Gastrocnemius medialis (tissue), 4 donors: ENCODE measurements at regions of chr3 and their contacts with region 1.

Region 1: DNA sequence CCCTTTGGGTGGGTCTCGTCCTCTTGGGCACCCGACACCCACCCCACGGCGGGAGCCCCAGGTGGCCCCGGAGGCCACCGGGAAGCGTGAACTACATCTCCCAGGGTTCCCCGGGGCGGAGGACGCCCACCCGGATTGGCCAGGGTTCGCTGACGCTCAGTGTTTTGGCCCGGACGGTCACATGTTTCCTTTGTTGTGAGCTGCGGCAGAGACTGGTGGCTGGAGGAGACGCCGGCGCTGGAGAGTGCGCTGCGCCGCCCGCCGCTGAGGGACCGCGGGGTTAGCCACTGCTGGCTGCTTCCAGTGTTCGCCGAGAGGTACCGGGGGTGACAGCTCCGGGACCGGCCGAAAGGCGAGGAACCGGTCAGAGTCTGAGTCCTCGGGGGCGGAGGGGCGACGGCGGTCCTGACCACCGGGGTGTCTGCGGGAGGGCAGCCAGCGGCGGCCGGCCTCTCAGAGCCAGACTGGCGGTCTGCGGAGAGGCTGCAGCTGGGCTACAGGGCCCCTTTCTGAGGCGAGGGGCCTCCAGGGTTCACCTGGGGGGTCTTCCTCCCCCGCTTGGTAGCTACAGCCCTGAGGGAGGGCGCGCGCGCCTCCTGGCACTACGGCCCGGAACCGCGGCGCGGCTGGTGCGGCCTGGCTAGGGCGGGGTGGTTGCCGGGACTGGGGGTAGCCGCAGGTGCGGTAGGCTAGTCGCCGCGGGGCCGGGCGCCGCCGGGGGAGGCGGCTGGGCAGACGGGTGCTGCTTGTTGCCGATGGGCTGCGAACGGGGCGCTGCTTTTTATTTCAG is at the start of gene KLHL24:
- DNase-seq: peak; percentile 95 to 96
- ATAC-seq: peak; percentile 78 to 82
- H3K4me3 ChIP-seq: peak within 1 kb of the TSS; percentile 95 to 99 (median 98)
- H3K27ac ChIP-seq: peak within 1 kb of the TSS; percentile 99 to 100 (median 100)
- H3K4me1 ChIP-seq: peaks cover 31 to 34% of the 10 kb centered on the region in 2 donors
- H3K27me3 ChIP-seq: no peaks in the 10 kb centered on the region
- CTCF ChIP-seq: no peak
- POLR2A ChIP-seq: peak; percentile 100
- total RNA-seq, gene KLHL24: 118 to 301 (median 222) TPM

Region 2: DNA sequence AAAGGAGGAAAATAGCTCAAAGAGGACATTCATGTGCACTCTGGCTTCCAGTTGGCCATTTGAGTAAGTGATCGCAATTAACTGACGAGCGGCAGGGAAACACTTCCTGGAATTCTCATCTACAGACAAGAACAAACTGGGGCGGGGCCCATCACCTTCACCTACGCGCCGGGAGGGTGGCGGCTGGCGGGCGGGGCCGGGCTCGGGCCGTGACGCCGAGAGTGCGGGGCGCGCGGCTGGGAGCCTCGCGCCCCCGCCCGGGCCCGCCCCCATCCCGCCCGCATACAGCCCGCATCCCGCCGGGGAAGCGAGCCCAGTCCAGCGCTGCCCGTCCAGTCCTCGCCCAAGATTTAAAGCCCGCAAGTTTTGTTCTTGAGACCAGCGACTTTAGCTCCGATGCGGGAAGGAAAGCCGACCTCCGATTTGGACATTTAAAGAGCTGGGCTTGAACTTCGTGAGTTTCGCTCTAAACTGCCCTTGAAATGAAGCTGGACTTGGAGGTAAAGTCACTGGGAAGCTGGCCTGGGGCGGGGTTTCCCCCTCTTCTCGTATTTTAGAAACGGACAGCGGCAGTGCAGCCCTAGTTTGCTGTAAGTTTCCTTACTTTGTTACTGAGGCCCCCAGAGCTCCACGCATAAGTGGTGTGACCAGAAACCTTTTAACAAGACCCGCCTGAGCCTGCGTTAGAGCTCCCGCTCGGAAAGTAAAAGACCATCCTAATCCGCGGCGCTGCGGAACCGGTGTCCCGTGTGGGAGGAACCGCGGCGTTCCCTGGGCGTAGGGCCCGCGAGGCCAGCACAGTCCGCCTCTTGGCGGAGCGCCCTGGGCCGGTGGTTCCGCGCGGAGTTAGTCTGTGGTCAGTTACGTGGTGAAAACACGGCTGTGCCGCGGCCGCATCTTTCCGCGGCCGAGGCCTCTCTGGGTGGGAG is 382.4 kb before region 1 on chr3 and contains the start of gene B3GNT5:
- in situ Hi-C with region 1: no loop called
- intact Hi-C with region 1: loop called (anchors 10 kb)
- DNase-seq: peak; percentile 68 to 79
- ATAC-seq: peak; percentile 76 to 81
- H3K4me3 ChIP-seq: peak within 1 kb of the TSS; percentile 72 to 86 (median 81)
- H3K27ac ChIP-seq: peak within 1 kb of the TSS; percentile 88 to 98 (median 91)
- H3K4me1 ChIP-seq: peaks cover 19 to 24% of the 10 kb centered on the region in 2 donors
- H3K27me3 ChIP-seq: no peaks in the 10 kb centered on the region
- CTCF ChIP-seq: no peak
- POLR2A ChIP-seq: peak; percentile 58 to 61
- total RNA-seq, gene B3GNT5: 18.2 to 41.2 (median 26.0) TPM

Region 3: DNA sequence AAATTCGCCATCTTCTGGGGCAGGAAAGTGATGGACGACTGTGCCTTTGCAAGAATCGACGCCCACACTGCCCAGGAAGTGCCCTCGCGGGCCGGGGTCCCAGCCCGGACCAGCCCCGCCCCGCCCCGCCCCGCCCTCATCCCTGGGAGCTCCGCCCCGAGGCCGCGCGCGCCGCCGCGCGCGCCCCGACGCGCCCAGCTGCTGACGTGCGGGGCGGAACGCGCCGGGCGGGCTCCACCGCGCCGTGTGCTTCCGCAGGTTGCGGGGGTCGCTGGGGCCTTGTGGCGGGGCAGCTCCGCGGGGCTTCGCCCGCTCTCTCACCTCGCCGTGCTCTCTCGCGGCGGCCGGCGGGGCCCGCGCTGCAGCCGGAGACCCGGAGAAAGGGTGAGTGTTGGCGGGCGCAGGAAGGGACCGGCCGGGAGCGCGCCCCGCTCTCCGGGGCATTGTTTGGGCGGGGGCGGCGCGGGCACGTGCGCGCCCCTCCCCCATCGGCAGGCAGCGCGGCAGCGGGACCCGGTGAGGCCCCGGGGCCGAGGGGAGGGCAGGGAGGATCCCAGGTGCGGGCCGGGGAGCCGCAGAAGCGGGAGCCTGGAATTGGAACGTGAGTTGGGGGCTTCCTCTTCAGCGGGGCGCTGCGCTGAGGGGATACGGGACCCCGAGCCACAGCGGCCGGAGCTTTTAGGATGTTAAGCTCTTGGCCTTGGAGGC is 62.1 kb after region 1 on chr3 and contains the start of gene YEATS2:
- in situ Hi-C with region 1: no loop called
- intact Hi-C with region 1: loop called (anchors 2 kb)
- DNase-seq: peak; percentile 10 to 38
- ATAC-seq: peak; percentile 87 to 89
- H3K4me3 ChIP-seq: peak within 1 kb of the TSS; percentile 63 to 98 (median 80)
- H3K27ac ChIP-seq: peak within 1 kb of the TSS; percentile 77 to 89 (median 88)
- H3K4me1 ChIP-seq: peaks cover 14 to 22% of the 10 kb centered on the region in 2 donors
- H3K27me3 ChIP-seq: no peaks in the 10 kb centered on the region
- CTCF ChIP-seq: no peak
- POLR2A ChIP-seq: peak; percentile 64 to 71
- total RNA-seq, gene YEATS2: 5.7 to 10.8 (median 9.3) TPM

Region 4: GRCh38 chr3:184314363-184314699 is 678.7 kb after region 1 on chr3 and contains the start of gene EIF4G1:
- in situ Hi-C with region 1: no loop called
- intact Hi-C with region 1: loop called (anchors 5 kb)
- DNase-seq: peak; percentile 94
- ATAC-seq: peak; percentile 76 to 84
- H3K4me3 ChIP-seq: peak within 1 kb of the TSS; percentile 73 to 94 (median 90)
- H3K27ac ChIP-seq: peak within 1 kb of the TSS; percentile 92 to 100 (median 98)
- H3K4me1 ChIP-seq: peaks cover 38 to 45% of the 10 kb centered on the region in 2 donors
- H3K27me3 ChIP-seq: no peaks in the 10 kb centered on the region
- CTCF ChIP-seq: no peak
- POLR2A ChIP-seq: peak; percentile 66 to 74
- total RNA-seq, gene EIF4G1: 474 to 863 (median 735) TPM